ENCODE measurements at regions of chr6 and their contacts with region 1.

Region 1: GRCh38 chr6:7730852-7731251 is 5.0 kb downstream of the BMP6 start:
- DNase-seq: peak; percentile 92
- ATAC-seq: peak; percentile 68
- H3K4me3 ChIP-seq: peak overlapping the region; percentile 38
- H3K27ac ChIP-seq: peak overlapping the region; percentile 67
- H3K4me1 ChIP-seq: peaks cover 52% of the 10 kb centered on the region
- H3K27me3 ChIP-seq: peaks cover 22% of the 10 kb centered on the region
- CTCF ChIP-seq: no peak

Region 2: DNA sequence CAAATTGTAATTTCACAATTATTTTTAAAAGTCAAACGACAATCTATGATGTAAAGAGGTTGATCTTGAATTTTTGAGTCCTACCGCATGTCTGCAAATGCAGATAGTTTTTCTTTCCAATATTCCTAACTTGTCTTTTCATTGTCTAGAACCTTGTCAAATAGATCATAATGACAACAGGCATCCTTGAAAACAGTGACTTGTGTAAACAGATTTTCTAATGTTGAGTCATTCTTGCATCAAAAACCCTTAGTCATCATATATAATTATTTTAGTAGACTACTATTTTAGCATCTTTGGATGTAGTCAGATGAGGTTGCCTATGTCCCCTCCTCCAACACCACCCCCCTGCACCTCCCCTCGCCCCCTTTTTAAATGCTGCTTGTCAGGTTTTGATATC is 38.9 kb after region 1 on chr6:
- CTCF ChIA-PET with region 1: no interaction called
- POLR2A ChIA-PET with region 1: no interaction called
- intact Hi-C with region 1: loop called (anchors 5 kb)
- DNase-seq: peak; percentile 73
- ATAC-seq: peak; percentile 68
- H3K4me3 ChIP-seq: no peak overlapping the region
- H3K27ac ChIP-seq: 0 out of 2 replicates have a peak overlapping the region, but pooled peaks have one; percentile 3
- H3K4me1 ChIP-seq: peaks cover 25% of the 10 kb centered on the region
- H3K27me3 ChIP-seq: no peaks in the 10 kb centered on the region
- CTCF ChIP-seq: no peak